SK-N-SH (cell line): ENCODE measurements at regions of chr2 and their contacts with region 1.

Region 1: DNA sequence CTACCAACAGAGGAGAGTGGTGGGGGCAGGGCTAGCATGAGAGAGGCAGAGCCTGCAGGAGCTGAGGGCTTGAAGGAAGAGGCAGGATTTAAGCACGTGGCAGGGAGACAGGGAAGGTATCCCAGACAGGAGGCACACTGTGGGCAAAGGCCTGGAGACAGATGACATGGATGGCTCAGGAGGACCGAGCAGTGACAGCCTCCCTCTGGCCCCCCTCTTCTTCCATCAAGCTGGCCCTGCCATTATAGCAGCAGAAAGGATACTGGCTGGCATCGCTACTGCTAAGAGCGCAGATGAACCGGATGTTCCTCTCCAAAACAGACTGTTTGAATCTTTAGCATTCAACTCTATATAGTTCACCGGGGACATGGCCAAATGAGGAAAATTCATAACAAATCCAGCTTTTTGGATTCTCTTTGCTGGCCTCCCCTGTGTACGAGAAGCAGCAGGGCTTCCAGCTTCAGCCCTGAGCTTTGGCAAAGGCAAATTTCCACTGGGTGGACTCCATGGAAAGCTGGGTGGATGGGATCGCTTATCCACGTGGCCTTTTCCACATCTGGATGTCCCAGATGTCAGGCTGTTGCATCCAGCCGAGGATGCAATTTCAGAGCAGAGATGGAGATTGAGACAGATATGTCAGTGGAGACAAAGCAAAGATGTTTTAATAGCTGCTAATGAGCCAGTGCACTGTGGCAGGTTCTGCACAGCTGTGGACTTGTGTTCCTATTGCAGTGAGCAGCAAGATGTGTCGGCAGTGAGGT is 36.2 kb downstream of the CAPN13 start:
- DNase-seq: peak; percentile 79
- H3K4me3 ChIP-seq: no peak overlapping the region
- H3K27ac ChIP-seq: peak overlapping the region in 1 of 2 experiments; percentile 64; a peak in 2 of 4 replicates
- H3K4me1 ChIP-seq: peaks cover 0 to 38% of the 10 kb centered on the region in 2 experiments; a peak in 2 of 4 replicates
- H3K27me3 ChIP-seq: no peaks in the 10 kb centered on the region
- CTCF ChIP-seq: no peak
- EP300 ChIP-seq: peak in 1 of 2 experiments; percentile 94; a peak in 2 of 4 replicates
- RAD21 ChIP-seq: peak; percentile 3; the same call in 1 of the 2 replicates

Region 2: GRCh38 chr2:30756047-30756719 is 14.8 kb before region 1 on chr2:
- CTCF ChIA-PET with region 1: interaction called, 23 read pairs
- POLR2A ChIA-PET with region 1: interaction called, 8 read pairs
- DNase-seq: peak; percentile 80
- H3K4me3 ChIP-seq: no peak overlapping the region
- H3K27ac ChIP-seq: peak overlapping the region in 1 of 2 experiments; percentile 81; a peak in 2 of 4 replicates
- H3K4me1 ChIP-seq: peaks cover 0 to 46% of the 10 kb centered on the region in 2 experiments; a peak in 3 of 4 replicates
- H3K27me3 ChIP-seq: no peaks in the 10 kb centered on the region
- CTCF ChIP-seq: no peak
- EP300 ChIP-seq: peak in 1 of 2 experiments; percentile 92; a peak in 2 of 4 replicates
- RAD21 ChIP-seq: peak; percentile 16; the same call in 1 of the 2 replicates